GM12878 (cell line): ENCODE measurements at regions of chr14 and their contacts with region 1.

Region 1: DNA sequence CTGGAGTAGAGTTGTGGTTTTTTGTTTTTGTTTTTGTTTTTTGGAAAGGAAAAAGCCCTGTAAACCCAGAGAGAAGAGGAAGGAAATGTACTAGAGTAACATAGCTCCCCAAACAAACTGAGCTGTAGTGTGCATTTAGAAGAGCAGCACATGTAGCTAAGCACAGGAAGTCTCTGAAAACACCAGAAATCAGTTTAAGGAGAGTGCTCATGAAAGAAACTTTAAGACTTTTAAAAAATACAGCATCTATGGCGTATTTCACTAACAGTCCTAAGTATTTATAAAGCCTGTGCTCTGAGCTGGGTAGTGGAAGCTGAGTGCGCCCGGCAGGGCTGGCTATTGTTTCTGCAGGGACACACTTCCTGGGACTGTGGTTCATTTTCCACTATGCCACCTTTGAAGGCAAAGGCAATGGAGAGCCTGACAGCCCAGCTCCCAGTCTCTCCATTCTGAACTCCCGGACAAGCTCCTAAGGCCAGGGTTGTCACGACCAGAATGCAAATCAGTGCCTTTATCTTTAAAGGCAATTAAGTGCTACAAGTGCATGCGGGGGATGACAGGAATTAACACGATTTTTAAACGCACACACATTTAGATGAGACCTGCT is 45.4 kb downstream of the NIN start:
- DNase-seq: no peak
- ATAC-seq: no peak
- H3K4me3 ChIP-seq: no peak overlapping the region
- H3K27ac ChIP-seq: peak overlapping the region; percentile 5
- H3K4me1 ChIP-seq: peaks cover 59% of the 10 kb centered on the region
- H3K27me3 ChIP-seq: no peaks in the 10 kb centered on the region
- CTCF ChIP-seq: no peak
- EP300 ChIP-seq: no peak
- POLR2A ChIP-seq: no peak
- RAD21 ChIP-seq: no peak

Region 2: DNA sequence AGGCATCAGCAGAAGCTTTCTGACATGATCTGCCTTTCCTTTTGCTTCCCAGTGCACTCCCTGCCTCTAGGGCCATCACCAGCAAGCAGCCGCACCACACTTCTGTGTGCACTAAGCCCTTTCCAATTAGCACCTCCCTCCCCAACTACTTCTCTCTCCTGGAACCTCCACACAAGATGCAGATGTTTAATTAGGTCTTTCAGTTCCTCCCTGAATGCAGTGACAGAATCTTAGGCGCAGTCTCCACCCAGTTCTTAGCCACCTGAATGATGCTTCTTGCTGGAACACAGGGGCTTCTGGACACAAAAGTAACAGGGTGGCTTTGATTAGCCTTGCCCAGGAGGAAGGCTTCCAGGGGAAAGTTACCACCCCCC is 12.5 kb after region 1 on chr14:
- CTCF ChIA-PET with region 1: interaction called, 5 read pairs
- POLR2A ChIA-PET with region 1: interaction called, 5 read pairs
- RAD21 ChIA-PET with region 1: interaction called, 6 read pairs
- SMC1A ChIA-PET with region 1: interaction called, 13 read pairs
- in situ Hi-C with region 1: no loop called
- intact Hi-C with region 1: no loop called
- DNase-seq: peak; percentile 42
- ATAC-seq: peak; percentile 98
- H3K4me3 ChIP-seq: no peak overlapping the region; the same call in 1 of the 2 replicates
- H3K27ac ChIP-seq: peak overlapping the region; percentile 36
- H3K4me1 ChIP-seq: peaks cover 55% of the 10 kb centered on the region
- H3K27me3 ChIP-seq: no peaks in the 10 kb centered on the region
- CTCF ChIP-seq: no peak
- EP300 ChIP-seq: 0 out of 4 replicates have a peak, but pooled peaks have one; percentile 17 to 44
- POLR2A ChIP-seq: 0 out of 2 replicates have a peak, but pooled peaks have one; percentile 28
- RAD21 ChIP-seq: no peak